ENCODE measurements at regions of chr1 and their contacts with region 1.

Region 1: GRCh38 chr1:155989242-155990004 is 11.1 kb upstream of the ARHGEF2 start:
- DNase-seq: peak; percentile 75 to 88 (median 78)
- ATAC-seq: peak; percentile 83 to 94 (median 92)
- H3K4me3 ChIP-seq: peak overlapping the region in 10 of 12 donors; percentile 25 to 62 (median 48)
- H3K27ac ChIP-seq: peak overlapping the region in 10 of 12 donors; percentile 12 to 90 (median 55)
- H3K4me1 ChIP-seq: peaks cover 0 to 37% (median 10%) of the 10 kb centered on the region in 12 donors
- H3K27me3 ChIP-seq: no peaks in the 10 kb centered on the region
- CTCF ChIP-seq: peak; percentile 96 to 100 (median 98)
- POLR2A ChIP-seq: no peak

Region 2: DNA sequence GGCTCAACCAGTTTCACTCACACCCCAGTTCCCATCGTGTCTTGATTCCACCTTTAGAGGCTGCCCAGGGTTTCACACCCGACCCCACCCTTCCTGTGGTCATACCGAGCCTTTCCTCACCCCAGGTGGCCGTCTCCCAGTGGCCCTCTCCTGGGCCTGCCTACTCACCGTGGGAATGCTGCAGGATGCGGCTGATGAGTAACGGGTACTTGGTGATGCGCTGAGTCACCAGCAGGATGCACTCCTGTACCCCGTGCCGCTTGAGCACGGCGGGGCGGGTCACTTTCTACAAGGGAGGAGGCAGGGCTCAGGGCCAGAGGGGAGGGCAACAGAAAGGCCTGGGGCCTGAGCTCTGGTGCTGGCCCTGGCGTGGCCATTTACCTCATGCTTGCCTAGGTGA is 27.5 kb before region 1 on chr1:
- intact Hi-C with region 1: loop called in 3 of 10 experiments (anchors 1 to 2 kb)
- DNase-seq: peak; percentile 61 to 87 (median 72)
- ATAC-seq: peak; percentile 50 to 81 (median 72)
- H3K4me3 ChIP-seq: peak overlapping the region in 1 of 12 donors; percentile 5
- H3K27ac ChIP-seq: peak overlapping the region in 11 of 12 donors; percentile 58 to 89 (median 71)
- H3K4me1 ChIP-seq: peaks cover 18 to 70% (median 45%) of the 10 kb centered on the region in 12 donors
- H3K27me3 ChIP-seq: no peaks in the 10 kb centered on the region
- CTCF ChIP-seq: peak in 10 of 12 donors; percentile 20 to 54 (median 36)
- POLR2A ChIP-seq: no peak

Region 3: GRCh38 chr1:155974208-155975165 is 14.9 kb before region 1 on chr1:
- intact Hi-C with region 1: no loop called
- DNase-seq: no peak
- ATAC-seq: no peak
- H3K4me3 ChIP-seq: peak overlapping the region in 10 of 12 donors; percentile 7 to 97 (median 86)
- H3K27ac ChIP-seq: peak overlapping the region; percentile 29 to 100 (median 98)
- H3K4me1 ChIP-seq: peaks cover 9 to 93% (median 74%) of the 10 kb centered on the region in 12 donors
- H3K27me3 ChIP-seq: no peaks in the 10 kb centered on the region
- CTCF ChIP-seq: no peak
- POLR2A ChIP-seq: no peak

Region 4: GRCh38 chr1:156025877-156026276 is 36.5 kb after region 1 on chr1:
- intact Hi-C with region 1: no loop called
- DNase-seq: peak in 4 of 5 donors; percentile 25 to 65 (median 38)
- ATAC-seq: peak; percentile 54 to 85 (median 78)
- H3K4me3 ChIP-seq: no peak overlapping the region
- H3K27ac ChIP-seq: no peak overlapping the region
- H3K4me1 ChIP-seq: peaks cover 0 to 8% (median 3%) of the 10 kb centered on the region in 12 donors
- H3K27me3 ChIP-seq: no peaks in the 10 kb centered on the region
- CTCF ChIP-seq: peak in 11 of 12 donors; percentile 21 to 57 (median 43)
- POLR2A ChIP-seq: no peak

Measured in heart left ventricle (tissue), 16 donors.